H1 (cell line): ENCODE measurements at regions of chr7 and their contacts with region 1.

Region 1: GRCh38 chr7:2497500-2498336 is 21.5 kb upstream of the GRIFIN start:
- DNase-seq: peak in 1 of 2 experiments; percentile 64
- H3K4me3 ChIP-seq: no peak overlapping the region
- H3K27ac ChIP-seq: 0 out of 2 replicates have a peak overlapping the region, but pooled peaks have one; percentile 29
- H3K4me1 ChIP-seq: peaks cover 0 to 53% (median 37%) of the 10 kb centered on the region in 4 experiments; a peak in 6 of 7 replicates
- H3K27me3 ChIP-seq: no peaks in the 10 kb centered on the region
- CTCF ChIP-seq: no peak
- EP300 ChIP-seq: no peak
- POLR2A ChIP-seq: no peak
- RAD21 ChIP-seq: no peak

Region 2: GRCh38 chr7:2477447-2478398 is 20.0 kb before region 1 on chr7:
- CTCF ChIA-PET with region 1: interaction called, 67 read pairs
- POLR2A ChIA-PET with region 1: interaction called, 3 read pairs
- DNase-seq: peak; percentile 36 to 82
- H3K4me3 ChIP-seq: no peak overlapping the region
- H3K27ac ChIP-seq: no peak overlapping the region
- H3K4me1 ChIP-seq: peaks cover 0 to 34% (median 20%) of the 10 kb centered on the region in 4 experiments; a peak in 6 of 7 replicates
- H3K27me3 ChIP-seq: no peaks in the 10 kb centered on the region; a peak in 2 of 7 replicates
- CTCF ChIP-seq: peak in 2 of 3 experiments; percentile 76 to 87; a peak in 3 of 4 replicates
- EP300 ChIP-seq: no peak
- POLR2A ChIP-seq: no peak
- RAD21 ChIP-seq: peak; percentile 85 to 86

Region 3: DNA sequence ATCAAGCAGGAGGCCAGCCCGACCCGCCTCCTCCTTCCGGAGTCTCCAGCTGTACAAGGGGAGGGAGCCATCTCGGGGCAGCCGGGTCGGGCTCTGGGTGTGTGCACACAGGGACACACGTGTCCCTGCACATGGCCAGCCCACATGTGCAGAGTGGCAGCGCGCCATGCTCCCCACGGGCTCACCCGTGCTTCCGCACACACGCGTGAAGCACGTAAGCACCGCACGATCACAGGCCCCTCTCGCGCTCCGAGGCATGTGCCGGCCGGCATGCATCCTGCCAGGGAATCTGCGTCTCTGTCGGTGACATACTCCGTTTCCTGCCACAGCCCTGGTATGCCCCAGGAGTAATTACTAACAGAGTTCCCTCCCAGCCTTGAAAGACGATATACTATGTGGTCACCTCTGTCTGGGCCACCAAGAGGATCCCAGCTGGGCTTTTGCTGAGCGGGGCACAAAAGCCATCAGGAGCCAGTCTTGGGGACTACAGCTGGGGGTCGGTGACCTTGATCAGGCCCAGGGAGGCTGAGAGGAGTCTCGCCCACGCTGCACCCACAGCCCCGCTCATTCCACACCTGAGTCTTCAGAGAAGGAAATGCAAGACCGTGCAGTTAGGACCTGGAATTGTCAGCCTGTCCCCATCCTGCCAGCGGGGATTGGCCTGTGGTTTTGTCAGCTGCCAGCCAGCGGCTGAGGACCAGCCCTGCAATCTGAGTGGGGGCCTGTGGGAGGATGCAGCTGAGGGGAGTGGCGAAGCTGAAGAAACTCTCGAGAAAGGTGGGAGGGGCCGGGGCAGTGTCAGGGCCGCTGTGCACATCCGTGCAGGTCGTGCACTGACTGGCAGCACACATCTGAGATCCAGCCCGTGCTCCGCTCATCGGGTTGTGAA is 10.9 kb after region 1 on chr7:
- CTCF ChIA-PET with region 1: interaction called, 4 read pairs
- POLR2A ChIA-PET with region 1: interaction called, 19 read pairs
- DNase-seq: no peak
- H3K4me3 ChIP-seq: no peak overlapping the region
- H3K27ac ChIP-seq: no peak overlapping the region
- H3K4me1 ChIP-seq: peaks cover 0 to 11% (median 3%) of the 10 kb centered on the region in 4 experiments; a peak in 3 of 7 replicates
- H3K27me3 ChIP-seq: no peaks in the 10 kb centered on the region
- CTCF ChIP-seq: no peak
- EP300 ChIP-seq: no peak
- POLR2A ChIP-seq: no peak
- RAD21 ChIP-seq: no peak

Region 4: DNA sequence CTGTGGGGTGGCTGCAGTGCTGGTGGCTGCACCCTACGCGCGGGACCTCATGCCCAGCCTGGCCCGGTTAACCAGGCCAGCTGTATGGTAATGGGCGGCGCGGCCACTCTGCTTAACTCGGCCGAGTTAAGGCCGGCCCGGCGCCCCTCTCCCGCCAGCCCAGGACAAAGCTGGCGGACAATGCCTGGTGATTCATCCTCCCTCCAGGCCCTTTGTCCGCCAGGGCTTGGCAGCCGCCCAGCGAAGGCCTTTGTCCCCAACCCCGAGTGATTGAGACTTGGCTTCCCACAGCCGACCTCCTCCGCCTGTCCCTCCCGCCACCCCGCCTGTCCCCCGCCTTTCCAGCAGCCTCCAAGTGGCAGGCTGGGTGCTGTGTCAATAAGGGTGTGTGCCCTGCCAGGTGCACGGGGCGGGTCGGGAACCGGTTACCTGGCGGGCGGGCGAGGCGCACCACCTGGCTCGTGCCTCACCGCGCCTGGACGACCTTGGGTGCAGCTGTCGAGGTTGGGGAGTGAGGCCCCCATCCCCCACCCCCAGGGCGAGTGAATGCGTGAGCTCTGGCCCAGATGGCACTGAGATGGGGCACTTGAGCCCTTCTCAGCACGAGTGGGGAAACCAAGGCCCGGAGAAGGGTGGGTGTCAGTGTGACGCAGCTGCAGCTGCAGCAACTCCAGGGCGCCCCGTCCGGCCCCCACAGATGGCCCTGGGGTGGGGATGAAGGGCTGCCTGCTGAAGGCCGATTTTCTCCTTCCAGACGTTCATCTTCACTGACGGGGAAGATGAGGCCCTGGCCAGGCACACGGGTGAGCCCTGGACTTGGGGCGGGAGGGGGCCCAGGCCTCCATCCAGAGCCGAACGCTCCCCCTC is 26.5 kb after region 1 on chr7:
- CTCF ChIA-PET with region 1: interaction called, 7 read pairs
- POLR2A ChIA-PET with region 1: interaction called, 16 read pairs
- DNase-seq: peak in 1 of 2 experiments; percentile 78
- H3K4me3 ChIP-seq: peak overlapping the region in 3 of 4 experiments; percentile 23 to 73 (median 38); a peak in 5 of 8 replicates
- H3K27ac ChIP-seq: peak overlapping the region; percentile 78
- H3K4me1 ChIP-seq: peaks cover 0 to 61% (median 44%) of the 10 kb centered on the region in 4 experiments; a peak in 6 of 7 replicates
- H3K27me3 ChIP-seq: peaks cover 0 to 12% (median 3%) of the 10 kb centered on the region in 4 experiments; a peak in 5 of 7 replicates
- CTCF ChIP-seq: no peak
- EP300 ChIP-seq: no peak
- POLR2A ChIP-seq: peak in 1 of 2 experiments; percentile 32; a peak in 1 of 3 replicates
- RAD21 ChIP-seq: no peak